A549 (cell line): ENCODE measurements at regions of chr6 and their contacts with region 1.

Region 1: DNA sequence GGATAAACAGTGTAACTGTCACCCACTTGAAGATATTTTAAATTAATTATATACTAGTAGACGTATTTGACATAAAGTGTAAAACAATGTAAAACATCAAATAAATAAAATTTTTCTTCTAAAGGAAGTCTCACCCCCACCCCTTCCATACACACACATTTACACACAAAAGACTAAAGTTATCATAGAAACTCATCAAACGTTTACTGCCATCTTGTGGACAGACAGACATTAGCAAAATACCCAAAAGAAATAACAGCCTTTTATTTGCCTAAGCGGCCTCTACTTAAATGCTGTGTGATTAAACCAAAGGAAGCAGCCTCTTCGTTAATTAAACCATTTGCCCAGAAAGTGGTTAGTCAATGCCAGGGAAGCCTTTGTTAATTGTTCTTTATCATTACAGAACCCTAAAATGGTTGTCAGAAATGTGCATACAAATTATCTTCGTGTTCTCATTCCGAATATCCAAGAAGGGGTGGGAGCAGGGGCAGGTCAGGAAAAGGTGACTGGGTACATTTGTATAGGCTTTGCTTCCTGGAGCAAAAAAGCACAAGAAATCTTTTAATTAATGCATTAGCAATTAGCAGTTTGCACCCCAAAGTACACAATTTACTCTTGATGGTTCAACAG is 176.2 kb upstream of the SASH1 start:
- DNase-seq: peak; percentile 16 to 57
- ATAC-seq: peak in 1 of 2 experiments; percentile 68; a peak in 2 of 6 replicates
- H3K4me3 ChIP-seq: no peak overlapping the region
- H3K27ac ChIP-seq: no peak overlapping the region
- H3K4me1 ChIP-seq: no peaks in the 10 kb centered on the region
- CTCF ChIP-seq: peak; percentile 66
- EP300 ChIP-seq: no peak
- POLR2A ChIP-seq: no peak
- RAD21 ChIP-seq: peak; percentile 74 to 80

Region 2: DNA sequence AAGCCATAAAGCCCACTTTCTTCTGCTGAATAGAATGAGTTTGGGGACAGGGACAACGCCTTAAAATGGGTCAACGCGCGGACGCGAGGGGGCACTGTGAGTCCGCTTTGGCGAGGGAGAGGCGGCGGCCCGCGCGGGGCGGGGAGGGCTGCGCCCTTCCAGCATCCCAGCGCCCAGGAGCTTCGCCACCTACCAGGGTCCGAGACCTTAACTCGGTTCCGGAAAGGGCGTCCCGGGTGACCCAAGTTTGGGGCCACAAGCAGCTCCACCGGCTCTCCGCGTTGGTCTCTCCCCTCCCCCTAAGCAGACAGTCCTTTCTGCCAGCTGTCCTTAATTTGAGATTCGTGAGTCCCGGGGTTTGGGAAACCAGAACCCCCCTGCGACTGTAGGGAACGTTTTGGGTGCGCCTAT is 659.7 kb before region 1 on chr6:
- CTCF ChIA-PET with region 1: interaction called, 46 read pairs
- POLR2A ChIA-PET with region 1: no interaction called
- DNase-seq: peak; percentile 55 to 58
- ATAC-seq: peak; percentile 51 to 84; a peak in 5 of 6 replicates
- H3K4me3 ChIP-seq: peak overlapping the region; percentile 74
- H3K27ac ChIP-seq: peak overlapping the region in 1 of 2 experiments; percentile 82; a peak in 2 of 6 replicates
- H3K4me1 ChIP-seq: 0 out of 3 replicates have a peak, but pooled peaks cover 5% of the 10 kb centered on the region
- CTCF ChIP-seq: peak; percentile 80
- EP300 ChIP-seq: no peak
- POLR2A ChIP-seq: no peak
- RAD21 ChIP-seq: peak; percentile 86 to 93

Region 3: GRCh38 chr6:148358188-148358785 is 191.8 kb after region 1 on chr6:
- CTCF ChIA-PET with region 1: no interaction called
- POLR2A ChIA-PET with region 1: no interaction called
- DNase-seq: no peak
- ATAC-seq: no peak
- H3K4me3 ChIP-seq: no peak overlapping the region
- H3K27ac ChIP-seq: no peak overlapping the region
- H3K4me1 ChIP-seq: no peaks in the 10 kb centered on the region
- CTCF ChIP-seq: no peak
- EP300 ChIP-seq: no peak
- POLR2A ChIP-seq: no peak
- RAD21 ChIP-seq: no peak